ENCODE measurements at regions of chr20 and their contacts with region 1.

Region 1: GRCh38 chr20:44885392-44886265 is at the start of gene YWHAB:
- DNase-seq: peak; percentile 99
- ATAC-seq: peak; percentile 98 to 99 (median 99)
- H3K4me3 ChIP-seq: peak within 1 kb of the TSS; percentile 60 to 99 (median 96)
- H3K27ac ChIP-seq: peak within 1 kb of the TSS; percentile 96 to 99 (median 99)
- H3K4me1 ChIP-seq: peaks cover 4 to 54% (median 50%) of the 10 kb centered on the region in 9 donors
- H3K27me3 ChIP-seq: no peaks in the 10 kb centered on the region
- CTCF ChIP-seq: peak in 3 of 9 donors; percentile 5 to 32 (median 29)
- total RNA-seq, gene YWHAB: 89.1 to 130 (median 116) TPM

Region 2: DNA sequence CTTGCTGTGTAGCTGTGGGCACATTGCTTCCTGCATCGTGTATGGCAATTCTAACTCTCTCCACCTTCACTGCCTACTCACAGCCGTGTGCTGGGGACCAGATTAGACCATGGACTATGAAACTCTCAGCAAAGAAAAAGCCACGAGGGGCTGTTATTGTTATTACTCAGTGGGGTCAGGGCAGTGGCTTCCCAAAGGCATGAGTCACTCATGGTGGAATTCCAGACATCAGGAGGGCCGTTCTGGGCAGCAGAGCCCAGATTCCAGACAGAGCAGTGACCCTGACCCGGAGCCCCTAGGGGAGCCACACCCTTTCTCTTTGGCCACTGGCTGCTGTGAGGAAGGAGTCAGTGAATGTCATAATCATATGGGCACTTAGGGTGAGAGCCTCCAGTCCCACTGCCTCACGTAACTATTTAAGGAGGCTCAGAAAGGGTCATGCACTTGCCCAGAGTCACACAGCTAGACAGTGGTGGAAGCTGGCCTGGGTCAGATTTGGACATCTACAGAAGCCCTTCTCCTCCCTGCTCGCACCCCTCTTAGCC is 192.6 kb before region 1 on chr20:
- intact Hi-C with region 1: no loop called
- DNase-seq: peak; percentile 71 to 73
- ATAC-seq: peak; percentile 67 to 90 (median 76)
- H3K4me3 ChIP-seq: no peak overlapping the region
- H3K27ac ChIP-seq: peak overlapping the region; percentile 26 to 88 (median 76)
- H3K4me1 ChIP-seq: peaks cover 15 to 61% (median 42%) of the 10 kb centered on the region in 9 donors
- H3K27me3 ChIP-seq: no peaks in the 10 kb centered on the region
- CTCF ChIP-seq: no peak

Region 3: DNA sequence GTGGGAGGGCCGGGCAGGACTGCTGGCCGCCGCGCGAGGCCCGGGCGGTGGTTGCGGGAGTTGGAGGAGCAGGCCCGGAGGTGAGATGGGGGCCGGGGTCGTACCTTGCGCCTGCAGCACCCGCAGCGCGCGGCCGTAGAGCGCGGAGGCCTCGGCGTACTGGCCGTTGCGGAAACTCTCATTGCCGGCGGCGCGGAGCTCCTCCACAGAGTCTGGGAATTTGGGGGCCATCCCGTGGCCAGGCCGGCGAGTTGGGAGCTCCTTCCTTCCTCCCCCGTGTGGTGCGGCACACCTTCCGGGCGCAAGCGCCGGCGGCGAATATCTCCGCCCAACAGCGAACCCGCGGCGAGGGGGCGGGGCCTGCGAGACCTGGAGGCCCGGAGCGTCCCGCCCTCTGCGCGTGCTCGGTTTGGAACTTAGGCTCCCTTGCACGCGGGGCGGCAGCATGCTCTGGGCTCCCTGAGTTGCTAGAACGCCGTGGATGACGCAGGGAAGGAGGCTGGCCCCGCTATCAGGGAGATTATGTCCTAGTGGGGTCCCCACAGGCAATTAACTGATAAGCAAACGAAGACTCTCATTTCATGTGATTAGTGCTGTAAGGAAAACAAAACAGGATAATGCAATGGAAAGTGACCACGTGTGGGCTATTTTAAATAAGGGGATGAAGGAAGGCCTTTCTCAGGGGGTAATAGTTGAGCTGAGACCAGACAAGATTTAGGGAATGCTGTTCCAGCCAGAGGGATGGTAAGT is 74.6 kb after region 1 on chr20 and contains the start of gene TOMM34:
- intact Hi-C with region 1: loop called in 6 of 10 experiments (anchors 5 to 10 kb)
- DNase-seq: peak; percentile 93 to 96
- ATAC-seq: peak; percentile 97 to 99 (median 98)
- H3K4me3 ChIP-seq: peak within 1 kb of the TSS; percentile 78 to 98 (median 88)
- H3K27ac ChIP-seq: peak within 1 kb of the TSS; percentile 31 to 91 (median 80)
- H3K4me1 ChIP-seq: peaks cover 0 to 25% (median 17%) of the 10 kb centered on the region in 9 donors
- H3K27me3 ChIP-seq: no peaks in the 10 kb centered on the region
- CTCF ChIP-seq: peak in 1 of 9 donors; percentile 5
- total RNA-seq, gene TOMM34: 7.8 to 15.8 (median 10.3) TPM

Region 4: GRCh38 chr20:44966030-44966961 is 80.7 kb after region 1 on chr20 and contains the start of gene STK4:
- intact Hi-C with region 1: loop called in 6 of 10 experiments (anchors 5 to 10 kb)
- DNase-seq: peak; percentile 93 to 95
- ATAC-seq: peak; percentile 98 to 99 (median 98)
- H3K4me3 ChIP-seq: peak within 1 kb of the TSS; percentile 63 to 92 (median 86)
- H3K27ac ChIP-seq: peak within 1 kb of the TSS; percentile 58 to 97 (median 84)
- H3K4me1 ChIP-seq: peaks cover 5 to 50% (median 17%) of the 10 kb centered on the region in 9 donors
- H3K27me3 ChIP-seq: no peaks in the 10 kb centered on the region
- CTCF ChIP-seq: peak in 8 of 9 donors; percentile 32 to 70 (median 56)
- total RNA-seq, gene STK4: 7.7 to 18.1 (median 8.2) TPM